Activated CD8-positive, alpha-beta T cell treated with anti-CD3 and anti-CD28 coated beads for 36 hours (primary cell): ENCODE measurements at regions of chr17 and their contacts with region 1.

Region 1: DNA sequence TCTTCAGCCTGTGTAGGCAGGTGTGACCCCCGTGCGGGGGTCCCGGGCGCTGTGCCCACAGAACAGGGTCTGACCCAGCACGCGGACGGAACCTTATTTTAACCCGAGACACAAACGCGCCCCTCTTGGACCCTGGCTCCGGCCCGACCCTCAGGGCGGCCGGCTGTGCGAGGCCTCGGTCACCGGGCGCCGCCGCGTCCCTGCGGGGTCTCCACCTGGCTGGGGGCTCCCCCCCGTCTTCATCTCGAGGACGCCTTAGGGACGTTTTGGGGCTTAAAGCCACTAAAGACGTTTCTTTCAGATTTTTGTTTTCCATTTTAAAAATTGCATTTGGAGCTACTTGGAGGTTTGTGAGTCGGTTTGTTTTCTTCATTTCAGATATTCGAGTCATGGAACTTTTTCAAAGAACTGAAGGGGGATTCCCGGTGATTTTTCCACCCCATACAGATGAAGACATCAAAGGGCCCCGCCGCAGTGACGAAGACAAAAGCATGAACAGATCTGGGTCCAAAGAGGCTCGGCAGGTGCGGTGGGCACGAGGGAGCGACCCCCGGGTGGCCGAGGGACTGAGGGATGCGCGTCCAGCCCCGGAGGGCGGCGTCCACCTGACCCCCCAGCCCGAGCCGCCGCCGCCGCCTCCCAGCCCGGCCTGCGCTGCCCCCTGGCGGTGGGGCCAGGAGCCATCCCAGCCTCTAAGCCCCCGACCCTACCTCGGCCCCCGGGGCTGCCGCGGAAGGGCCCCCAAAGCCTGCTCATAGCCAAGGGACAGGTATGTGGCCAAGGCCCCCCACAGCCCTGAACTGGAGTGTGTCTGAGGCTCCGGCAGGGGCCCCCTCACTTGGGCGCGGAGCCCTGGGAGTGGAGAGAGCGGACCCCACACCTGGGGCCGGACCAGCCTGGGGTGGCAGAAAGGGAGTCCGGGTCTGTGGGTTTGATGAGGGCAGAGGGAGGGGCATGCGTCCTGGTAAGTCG is 3.8 kb upstream of the CD7 start:
- DNase-seq: peak; percentile 96
- ATAC-seq: peak; percentile 24
- H3K4me3 Mint-ChIP-seq: peak overlapping the region; percentile 83
- H3K27ac Mint-ChIP-seq: peak overlapping the region; percentile 98
- H3K4me1 Mint-ChIP-seq: peaks cover 32% of the 10 kb centered on the region
- H3K27me3 Mint-ChIP-seq: no peaks in the 10 kb centered on the region
- CTCF ChIP-seq: peak; percentile 100

Region 2: DNA sequence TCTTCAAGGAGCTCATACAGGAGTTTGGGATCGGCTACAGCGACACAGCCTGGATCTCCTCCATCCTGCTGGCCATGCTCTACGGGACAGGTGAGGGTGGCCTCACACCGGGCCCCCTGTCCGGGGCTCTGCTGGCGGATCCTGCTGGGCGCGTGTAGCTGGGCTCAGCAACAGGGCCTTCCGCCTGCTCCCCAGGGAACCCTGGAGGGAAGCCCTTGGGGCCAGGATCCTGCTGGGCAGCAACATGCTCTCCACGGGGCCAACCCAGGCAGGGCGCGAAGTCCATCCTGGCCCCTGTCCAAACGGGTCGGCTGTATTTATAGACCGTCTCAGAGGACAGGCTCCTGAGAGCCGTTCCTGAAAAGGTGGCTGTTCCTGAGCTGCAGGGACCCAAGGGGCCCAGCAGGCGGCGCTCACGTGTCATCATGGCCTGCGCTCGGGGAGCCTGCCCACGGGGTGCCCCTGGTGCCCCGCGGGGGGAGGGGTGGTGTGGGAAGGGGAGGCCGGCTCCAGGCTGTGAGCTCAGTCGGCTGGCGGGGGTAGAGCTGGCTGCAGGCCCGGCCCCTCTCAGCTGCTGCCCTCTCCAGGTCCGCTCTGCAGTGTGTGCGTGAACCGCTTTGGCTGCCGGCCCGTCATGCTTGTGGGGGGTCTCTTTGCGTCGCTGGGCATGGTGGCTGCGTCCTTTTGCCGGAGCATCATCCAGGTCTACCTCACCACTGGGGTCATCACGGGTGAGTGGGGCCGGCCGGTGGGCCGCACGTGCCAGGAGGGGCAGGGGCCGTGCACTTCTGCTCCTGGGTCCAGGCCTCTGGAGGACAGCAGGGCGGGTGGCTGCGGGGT is 84.9 kb before region 1 on chr17:
- CTCF ChIA-PET with region 1: interaction called, 15 read pairs
- POLR2A ChIA-PET with region 1: interaction called, 3 read pairs
- intact Hi-C with region 1: loop called (anchors 5 kb)
- DNase-seq: peak; percentile 74
- ATAC-seq: peak; percentile 40
- H3K4me3 Mint-ChIP-seq: no peak overlapping the region
- H3K27ac Mint-ChIP-seq: no peak overlapping the region
- H3K4me1 Mint-ChIP-seq: peaks cover 44% of the 10 kb centered on the region
- H3K27me3 Mint-ChIP-seq: no peaks in the 10 kb centered on the region
- CTCF ChIP-seq: peak; percentile 89

Region 3: DNA sequence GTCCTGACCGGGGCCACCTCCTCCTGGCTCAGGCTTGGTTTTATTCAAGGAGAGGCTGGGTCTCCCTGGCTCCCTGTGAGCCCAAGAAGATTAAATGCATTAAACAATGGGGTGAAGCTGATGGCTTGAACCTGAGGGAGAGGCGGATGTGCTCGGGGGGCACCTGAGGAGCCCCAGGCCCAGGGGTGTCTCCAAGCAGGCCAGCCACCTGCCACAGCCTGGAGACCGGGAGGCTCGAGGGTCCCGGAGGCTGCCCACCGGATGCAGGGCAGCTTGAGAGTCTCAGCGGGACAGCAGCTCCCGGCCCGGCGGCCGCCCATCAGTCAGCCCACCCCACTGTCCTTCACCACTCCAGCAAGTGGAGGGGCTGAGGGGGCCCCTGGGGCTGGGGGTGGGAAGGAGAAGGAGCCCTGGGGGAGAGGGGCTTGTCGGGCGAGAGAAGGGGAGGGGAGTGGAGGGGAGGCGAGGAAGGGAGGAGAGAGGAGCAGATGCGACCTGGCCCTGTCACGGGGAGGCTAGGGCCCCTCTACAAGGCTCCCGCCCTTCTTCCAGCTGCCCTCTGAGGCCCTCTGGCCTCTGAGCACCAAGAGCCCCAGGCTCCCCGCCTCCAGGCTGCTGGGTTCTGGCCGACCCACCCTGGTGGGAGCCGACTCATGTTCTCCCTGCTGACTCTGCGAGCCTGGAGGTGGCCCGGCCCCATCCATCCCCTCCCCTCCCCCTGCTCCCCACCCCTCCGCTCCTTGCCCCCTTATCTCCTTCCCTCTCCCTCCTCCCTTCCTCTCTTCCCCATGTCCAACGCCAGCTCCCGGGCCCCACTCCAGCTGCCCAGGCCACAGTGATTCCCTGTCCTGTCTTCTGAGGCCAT is 17.1 kb before region 1 on chr17:
- CTCF ChIA-PET with region 1: interaction called, 68 read pairs
- POLR2A ChIA-PET with region 1: interaction called, 227 read pairs
- intact Hi-C with region 1: no loop called
- DNase-seq: no peak
- ATAC-seq: no peak
- H3K4me3 Mint-ChIP-seq: no peak overlapping the region
- H3K27ac Mint-ChIP-seq: peak overlapping the region; percentile 69
- H3K4me1 Mint-ChIP-seq: peaks cover 73% of the 10 kb centered on the region
- H3K27me3 Mint-ChIP-seq: no peaks in the 10 kb centered on the region
- CTCF ChIP-seq: no peak

Region 4: DNA sequence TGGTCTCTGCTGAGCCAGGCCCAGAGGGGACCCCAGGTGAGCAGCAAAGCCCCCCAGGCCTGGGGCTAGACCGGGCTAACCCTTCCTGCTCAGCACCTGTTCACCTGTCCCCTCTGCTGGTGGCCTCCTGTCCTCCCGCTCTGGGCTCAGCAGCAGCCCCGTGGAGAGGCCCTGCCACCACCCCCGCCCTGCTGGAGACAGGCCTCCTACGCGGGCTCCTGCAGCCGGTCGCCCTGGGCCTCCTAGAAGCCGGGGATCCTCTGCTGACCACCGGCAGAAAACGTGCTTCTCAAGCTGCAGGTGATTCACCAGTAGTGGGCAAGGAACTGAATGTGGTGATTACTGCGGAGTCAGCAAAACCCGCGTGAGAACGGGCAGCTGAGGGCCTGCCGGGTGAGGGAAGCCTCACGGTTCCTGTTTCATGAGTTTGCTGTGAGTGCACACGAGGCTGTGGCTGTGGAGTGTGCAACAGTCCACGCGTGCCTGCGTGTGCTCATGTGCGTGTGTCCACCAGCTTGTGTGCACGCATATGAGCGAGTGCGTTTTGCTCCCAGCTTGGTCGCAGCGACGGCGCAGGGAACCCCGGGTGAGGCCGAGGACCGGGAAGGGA is 11.5 kb after region 1 on chr17:
- CTCF ChIA-PET with region 1: interaction called, 9 read pairs
- POLR2A ChIA-PET with region 1: interaction called, 14 read pairs
- intact Hi-C with region 1: no loop called
- DNase-seq: peak; percentile 42
- ATAC-seq: peak; percentile 32
- H3K4me3 Mint-ChIP-seq: peak overlapping the region; percentile 63
- H3K27ac Mint-ChIP-seq: no peak overlapping the region
- H3K4me1 Mint-ChIP-seq: peaks cover 23% of the 10 kb centered on the region
- H3K27me3 Mint-ChIP-seq: peaks cover 7% of the 10 kb centered on the region
- CTCF ChIP-seq: no peak

Region 5: GRCh38 chr17:82344175-82344907 is 23.1 kb after region 1 on chr17:
- CTCF ChIA-PET with region 1: interaction called, 13 read pairs
- POLR2A ChIA-PET with region 1: no interaction called
- intact Hi-C with region 1: no loop called
- DNase-seq: no peak
- ATAC-seq: no peak
- H3K4me3 Mint-ChIP-seq: no peak overlapping the region
- H3K27ac Mint-ChIP-seq: no peak overlapping the region
- H3K4me1 Mint-ChIP-seq: peaks cover 8% of the 10 kb centered on the region
- H3K27me3 Mint-ChIP-seq: peaks cover 5% of the 10 kb centered on the region
- CTCF ChIP-seq: no peak

Region 6: GRCh38 chr17:82450170-82451106 is 129.2 kb after region 1 on chr17 and contains the start of gene CYBC1:
- CTCF ChIA-PET with region 1: no interaction called
- POLR2A ChIA-PET with region 1: no interaction called
- intact Hi-C with region 1: no loop called
- DNase-seq: peak; percentile 96
- ATAC-seq: peak; percentile 72
- H3K4me3 Mint-ChIP-seq: peak within 1 kb of the TSS; percentile 99
- H3K27ac Mint-ChIP-seq: peak within 1 kb of the TSS; percentile 100
- H3K4me1 Mint-ChIP-seq: peaks cover 27% of the 10 kb centered on the region
- H3K27me3 Mint-ChIP-seq: no peaks in the 10 kb centered on the region
- CTCF ChIP-seq: no peak
- total RNA-seq, gene CYBC1: 189 to 192 TPM